CD8-positive, alpha-beta T cell (primary cell): ENCODE measurements at regions of chr6 and their contacts with region 1.

Region 1: DNA sequence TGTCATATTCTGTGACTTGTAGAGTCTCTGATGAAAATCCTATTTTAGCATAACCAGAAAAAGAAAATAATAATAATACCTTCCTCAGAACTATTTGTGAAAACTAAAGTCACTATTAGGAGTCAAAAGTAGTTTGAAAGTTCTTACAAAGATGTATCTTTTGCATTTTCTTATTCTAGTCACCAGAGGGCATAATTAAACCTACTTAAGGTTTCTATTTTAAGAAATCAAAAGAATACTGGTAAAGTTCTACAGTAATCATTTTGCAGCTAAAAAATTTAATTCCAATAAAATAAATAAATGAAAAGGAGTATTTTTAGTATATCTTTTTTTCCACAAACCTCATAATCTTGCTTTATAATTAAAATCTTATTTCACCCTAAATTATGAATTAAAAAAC is 28.0 kb upstream of the MCM9 start:
- DNase-seq: peak in 1 of 9 experiments; percentile 22
- ATAC-seq: no peak
- H3K4me3 ChIP-seq: no peak overlapping the region
- H3K4me3 Mint-ChIP-seq: no peak overlapping the region
- H3K27ac ChIP-seq: no peak overlapping the region
- H3K27ac Mint-ChIP-seq: no peak overlapping the region
- H3K4me1 ChIP-seq: no peaks in the 10 kb centered on the region
- H3K4me1 Mint-ChIP-seq: peaks cover 6% of the 10 kb centered on the region
- H3K27me3 ChIP-seq: no peaks in the 10 kb centered on the region
- H3K27me3 Mint-ChIP-seq: no peaks in the 10 kb centered on the region
- CTCF ChIP-seq: peak; percentile 49

Region 2: DNA sequence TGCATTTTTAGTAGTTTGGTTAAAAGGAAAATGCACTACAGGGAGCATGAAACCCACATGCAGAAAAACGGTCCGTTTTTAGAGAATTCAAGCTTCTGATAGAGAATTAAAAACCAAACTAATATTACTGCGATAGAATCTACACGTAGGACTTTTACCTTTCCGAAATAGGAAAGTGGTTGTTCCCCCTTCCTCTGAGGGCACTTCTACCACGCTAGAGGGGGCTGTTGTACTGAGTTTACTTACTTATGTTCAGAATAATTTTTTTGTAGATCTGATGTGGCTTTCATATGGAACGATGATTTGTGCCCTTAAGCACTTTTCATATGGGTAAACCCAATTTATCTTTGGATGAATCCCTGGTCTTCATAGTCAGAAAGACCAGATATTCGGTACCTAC is 679.2 kb before region 1 on chr6:
- CTCF ChIA-PET with region 1: interaction called, 4 read pairs
- POLR2A ChIA-PET with region 1: no interaction called
- intact Hi-C with region 1: loop called (anchors 5 kb)
- DNase-seq: peak in 8 of 9 experiments; percentile 14 to 74 (median 52)
- ATAC-seq: peak; percentile 61
- H3K4me3 ChIP-seq: no peak overlapping the region
- H3K4me3 Mint-ChIP-seq: no peak overlapping the region
- H3K27ac ChIP-seq: no peak overlapping the region
- H3K27ac Mint-ChIP-seq: no peak overlapping the region
- H3K4me1 ChIP-seq: no peaks in the 10 kb centered on the region
- H3K4me1 Mint-ChIP-seq: peaks cover 2% of the 10 kb centered on the region
- H3K27me3 ChIP-seq: no peaks in the 10 kb centered on the region
- H3K27me3 Mint-ChIP-seq: peaks cover 11% of the 10 kb centered on the region
- CTCF ChIP-seq: peak; percentile 61